Breast epithelium (tissue), 4 donors: ENCODE measurements at regions of chr1 and their contacts with region 1.

Region 1: GRCh38 chr1:9399510-9400424 is 107.1 kb downstream of the SPSB1 start:
- DNase-seq: no peak
- H3K4me3 ChIP-seq: no peak overlapping the region
- H3K27ac ChIP-seq: no peak overlapping the region
- H3K4me1 ChIP-seq: no peaks in the 10 kb centered on the region
- H3K27me3 ChIP-seq: no peaks in the 10 kb centered on the region
- CTCF ChIP-seq: no peak
- POLR2A ChIP-seq: no peak

Region 2: DNA sequence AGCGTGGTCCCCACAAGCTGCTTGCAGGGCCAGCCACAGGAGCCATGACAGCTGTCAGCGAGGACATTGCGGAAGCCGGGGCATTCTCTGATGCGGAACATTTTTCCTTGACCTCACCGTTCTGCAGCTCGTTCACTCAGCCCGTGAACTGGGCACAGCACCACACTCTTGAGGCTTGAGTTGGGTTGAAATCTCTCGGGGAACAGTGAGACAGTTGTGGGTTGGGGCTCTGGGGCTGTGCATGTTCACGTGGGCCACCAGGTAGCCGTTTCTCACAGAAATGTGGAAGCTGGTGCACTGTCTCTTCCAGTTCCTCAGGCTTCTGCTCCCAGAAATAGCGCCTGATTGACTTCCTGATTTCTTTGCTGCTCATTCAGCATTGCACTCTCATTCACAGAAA is 37.3 kb before region 1 on chr1:
- intact Hi-C with region 1: no loop called
- DNase-seq: no peak
- H3K4me3 ChIP-seq: no peak overlapping the region
- H3K27ac ChIP-seq: no peak overlapping the region
- H3K4me1 ChIP-seq: no peaks in the 10 kb centered on the region
- H3K27me3 ChIP-seq: no peaks in the 10 kb centered on the region
- CTCF ChIP-seq: no peak
- POLR2A ChIP-seq: no peak

Region 3: GRCh38 chr1:9375912-9376311 is 23.9 kb before region 1 on chr1:
- intact Hi-C with region 1: loop called (anchors 1 kb)
- DNase-seq: no peak
- H3K4me3 ChIP-seq: no peak overlapping the region
- H3K27ac ChIP-seq: peak overlapping the region; percentile 64 to 79
- H3K4me1 ChIP-seq: no peaks in the 10 kb centered on the region
- H3K27me3 ChIP-seq: no peaks in the 10 kb centered on the region
- CTCF ChIP-seq: no peak
- POLR2A ChIP-seq: no peak

Region 4: DNA sequence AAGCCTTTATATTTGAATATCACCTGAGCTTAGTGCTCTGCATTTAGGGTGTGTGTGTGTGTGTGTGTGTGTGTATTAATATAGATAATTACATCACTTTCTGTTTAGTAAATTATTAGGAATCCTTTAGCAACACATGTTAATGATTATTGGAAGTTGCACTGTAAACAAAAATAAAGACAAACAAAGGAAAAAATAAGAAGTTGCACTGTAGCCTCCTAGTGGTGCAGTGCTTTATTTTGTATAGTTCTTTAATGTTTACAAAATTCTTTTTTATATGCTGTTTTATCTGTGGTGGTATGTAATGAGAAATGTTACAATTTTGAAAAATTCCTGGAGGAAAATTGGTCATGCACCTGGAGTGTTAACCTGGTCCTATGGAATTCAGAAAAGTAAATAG is 702.2 kb after region 1 on chr1:
- intact Hi-C with region 1: no loop called
- DNase-seq: no peak
- H3K4me3 ChIP-seq: no peak overlapping the region
- H3K27ac ChIP-seq: no peak overlapping the region
- H3K4me1 ChIP-seq: no peaks in the 10 kb centered on the region
- H3K27me3 ChIP-seq: no peaks in the 10 kb centered on the region
- CTCF ChIP-seq: no peak
- POLR2A ChIP-seq: no peak

Region 5: GRCh38 chr1:10890491-10891071 is 1490.8 kb after region 1 on chr1:
- intact Hi-C with region 1: loop called (anchors 5 kb)
- DNase-seq: peak in 1 of 2 donors; percentile 40
- H3K4me3 ChIP-seq: no peak overlapping the region
- H3K27ac ChIP-seq: no peak overlapping the region
- H3K4me1 ChIP-seq: no peaks in the 10 kb centered on the region
- H3K27me3 ChIP-seq: peaks cover 3 to 36% of the 10 kb centered on the region in 2 donors
- CTCF ChIP-seq: no peak
- POLR2A ChIP-seq: no peak